Breast epithelium (tissue), 4 donors: ENCODE measurements at regions of chr20 and their contacts with region 1.

Region 1: GRCh38 chr20:57594092-57594911 is 25.9 kb downstream of the ZBP1 start:
- DNase-seq: no peak
- H3K4me3 ChIP-seq: no peak overlapping the region
- H3K27ac ChIP-seq: no peak overlapping the region
- H3K4me1 ChIP-seq: no peaks in the 10 kb centered on the region
- H3K27me3 ChIP-seq: no peaks in the 10 kb centered on the region
- CTCF ChIP-seq: peak; percentile 54 to 65 (median 55)
- POLR2A ChIP-seq: no peak

Region 2: GRCh38 chr20:57509722-57510164 is 84.6 kb before region 1 on chr20:
- intact Hi-C with region 1: loop called (anchors 1 kb)
- DNase-seq: no peak
- H3K4me3 ChIP-seq: no peak overlapping the region
- H3K27ac ChIP-seq: no peak overlapping the region
- H3K4me1 ChIP-seq: no peaks in the 10 kb centered on the region
- H3K27me3 ChIP-seq: no peaks in the 10 kb centered on the region
- CTCF ChIP-seq: no peak
- POLR2A ChIP-seq: no peak

Region 3: DNA sequence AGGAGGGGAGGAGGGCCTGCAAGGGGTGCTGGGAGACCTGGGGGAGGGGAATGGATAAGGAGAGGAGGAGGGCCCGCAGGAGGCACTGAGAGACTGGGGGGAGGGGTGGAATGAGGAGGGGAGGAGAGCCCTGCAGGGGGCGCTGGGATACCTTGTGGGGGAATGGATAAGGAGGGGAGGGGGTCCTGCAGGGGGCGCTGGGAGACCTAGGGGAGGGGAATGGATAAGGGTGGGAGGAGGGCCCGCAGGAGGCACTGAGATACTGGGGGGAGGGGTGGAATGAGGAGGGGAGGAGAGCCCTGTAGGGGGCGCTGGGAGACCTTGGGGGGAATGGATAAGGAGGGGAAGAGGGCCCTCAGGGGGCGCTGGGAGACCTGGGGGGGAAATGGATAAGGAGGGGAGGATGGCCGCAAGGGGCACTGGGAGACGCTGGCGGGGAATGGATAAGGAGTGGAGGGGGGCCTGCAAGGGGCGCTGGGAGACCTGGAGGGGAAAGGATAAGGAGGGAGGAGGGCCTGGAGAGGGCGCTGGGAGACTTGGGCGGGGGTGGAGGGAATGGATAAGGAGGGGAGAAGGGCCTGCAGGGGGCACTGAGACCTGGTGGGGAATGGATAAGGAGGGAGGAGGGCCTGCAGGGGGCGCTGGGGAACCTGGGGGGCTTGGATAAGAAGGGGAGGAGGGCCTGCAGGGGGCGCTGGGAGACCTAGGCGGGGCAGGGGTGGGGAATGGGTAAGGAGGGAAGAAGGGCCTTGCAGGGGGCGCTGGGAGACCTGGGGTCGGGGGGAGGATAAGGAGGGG is 68.0 kb before region 1 on chr20:
- intact Hi-C with region 1: loop called (anchors 5 kb)
- DNase-seq: no peak
- H3K4me3 ChIP-seq: no peak overlapping the region
- H3K27ac ChIP-seq: no peak overlapping the region
- H3K4me1 ChIP-seq: no peaks in the 10 kb centered on the region
- H3K27me3 ChIP-seq: peaks cover 0 to 3% of the 10 kb centered on the region in 2 donors
- CTCF ChIP-seq: no peak
- POLR2A ChIP-seq: no peak

Region 4: DNA sequence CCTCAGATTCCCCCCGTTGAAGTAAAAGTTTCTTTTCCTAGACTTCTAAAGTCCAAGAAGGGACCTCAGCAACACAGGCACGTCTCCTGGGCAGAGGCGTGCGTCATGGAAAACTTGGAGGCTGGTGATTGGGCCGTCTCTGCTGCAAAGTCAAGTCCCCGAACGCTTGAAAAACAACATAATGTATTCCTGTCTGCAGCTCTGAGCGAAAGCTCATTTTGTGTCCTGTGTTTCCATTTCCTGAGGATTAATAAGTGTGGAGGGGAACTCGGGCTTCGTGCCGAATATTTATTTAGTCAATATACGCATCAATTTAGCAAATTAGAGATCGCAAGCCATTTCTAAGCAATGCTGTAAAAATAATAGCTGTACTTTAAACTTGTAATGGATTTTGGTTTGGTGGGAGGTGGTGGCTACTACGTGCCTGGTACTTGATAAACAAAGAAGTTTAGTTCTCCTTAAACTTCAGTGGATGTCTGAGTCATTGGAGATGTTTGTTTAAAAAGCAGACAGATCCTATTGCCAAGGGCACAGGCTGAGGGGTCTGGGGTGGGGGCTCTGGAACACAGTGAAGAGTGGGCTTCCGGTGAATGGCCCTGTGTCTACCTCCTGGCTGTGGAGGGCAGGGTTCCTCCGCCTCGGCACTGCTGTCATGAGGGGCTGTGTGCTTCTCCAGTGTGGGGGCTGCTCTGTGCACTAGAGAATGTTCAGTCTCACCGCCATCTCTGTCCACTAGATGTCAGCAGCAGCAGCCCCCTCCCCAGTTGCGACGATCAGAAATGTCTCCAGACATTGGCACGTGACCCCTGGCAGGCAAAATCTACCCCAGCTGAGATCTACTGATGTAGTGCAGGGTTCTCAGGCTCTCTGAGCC is 11.6 kb before region 1 on chr20:
- intact Hi-C with region 1: no loop called
- DNase-seq: no peak
- H3K4me3 ChIP-seq: peak overlapping the region in 1 of 3 donors; percentile 27
- H3K27ac ChIP-seq: peak overlapping the region in 1 of 2 donors; percentile 72
- H3K4me1 ChIP-seq: no peaks in the 10 kb centered on the region
- H3K27me3 ChIP-seq: peaks cover 0 to 68% of the 10 kb centered on the region in 2 donors
- CTCF ChIP-seq: no peak
- POLR2A ChIP-seq: no peak